Natural killer cell (primary cell): ENCODE measurements at regions of chr16 and their contacts with region 1.

Region 1: GRCh38 chr16:29926005-29926710 is at the start of gene KCTD13:
- DNase-seq: peak; percentile 92 to 96
- ATAC-seq: peak; percentile 90 to 95 (median 93)
- H3K4me3 ChIP-seq: peak within 1 kb of the TSS; percentile 73
- H3K4me3 Mint-ChIP-seq: peak within 1 kb of the TSS; percentile 97
- H3K27ac ChIP-seq: peak within 1 kb of the TSS; percentile 82
- H3K27ac Mint-ChIP-seq: peak within 1 kb of the TSS; percentile 91 to 97
- H3K4me1 ChIP-seq: peaks cover 21% of the 10 kb centered on the region
- H3K4me1 Mint-ChIP-seq: peaks cover 25 to 42% of the 10 kb centered on the region in 2 donors
- H3K27me3 ChIP-seq: no peaks in the 10 kb centered on the region
- H3K27me3 Mint-ChIP-seq: no peaks in the 10 kb centered on the region
- CTCF ChIP-seq: no peak
- total RNA-seq, gene KCTD13: 36.1 to 54.0 (median 51.7) TPM

Region 2: GRCh38 chr16:29961479-29962343 is 35.6 kb after region 1 on chr16 and contains the start of gene TMEM219:
- intact Hi-C with region 1: loop called (anchors 1 kb)
- DNase-seq: peak; percentile 96 to 97
- ATAC-seq: peak; percentile 89 to 97 (median 90)
- H3K4me3 ChIP-seq: peak within 1 kb of the TSS; percentile 75
- H3K4me3 Mint-ChIP-seq: peak within 1 kb of the TSS; percentile 93
- H3K27ac ChIP-seq: peak within 1 kb of the TSS; percentile 78
- H3K27ac Mint-ChIP-seq: peak within 1 kb of the TSS; percentile 88 to 90
- H3K4me1 ChIP-seq: peaks cover 17% of the 10 kb centered on the region
- H3K4me1 Mint-ChIP-seq: peaks cover 11 to 17% of the 10 kb centered on the region in 2 donors
- H3K27me3 ChIP-seq: no peaks in the 10 kb centered on the region
- H3K27me3 Mint-ChIP-seq: no peaks in the 10 kb centered on the region
- CTCF ChIP-seq: peak; percentile 23
- total RNA-seq, gene TMEM219: 50.2 to 69.5 (median 50.8) TPM